Head of caudate nucleus (tissue), 42 donors: ENCODE measurements at regions of chr12 and their contacts with region 1.

Region 1: DNA sequence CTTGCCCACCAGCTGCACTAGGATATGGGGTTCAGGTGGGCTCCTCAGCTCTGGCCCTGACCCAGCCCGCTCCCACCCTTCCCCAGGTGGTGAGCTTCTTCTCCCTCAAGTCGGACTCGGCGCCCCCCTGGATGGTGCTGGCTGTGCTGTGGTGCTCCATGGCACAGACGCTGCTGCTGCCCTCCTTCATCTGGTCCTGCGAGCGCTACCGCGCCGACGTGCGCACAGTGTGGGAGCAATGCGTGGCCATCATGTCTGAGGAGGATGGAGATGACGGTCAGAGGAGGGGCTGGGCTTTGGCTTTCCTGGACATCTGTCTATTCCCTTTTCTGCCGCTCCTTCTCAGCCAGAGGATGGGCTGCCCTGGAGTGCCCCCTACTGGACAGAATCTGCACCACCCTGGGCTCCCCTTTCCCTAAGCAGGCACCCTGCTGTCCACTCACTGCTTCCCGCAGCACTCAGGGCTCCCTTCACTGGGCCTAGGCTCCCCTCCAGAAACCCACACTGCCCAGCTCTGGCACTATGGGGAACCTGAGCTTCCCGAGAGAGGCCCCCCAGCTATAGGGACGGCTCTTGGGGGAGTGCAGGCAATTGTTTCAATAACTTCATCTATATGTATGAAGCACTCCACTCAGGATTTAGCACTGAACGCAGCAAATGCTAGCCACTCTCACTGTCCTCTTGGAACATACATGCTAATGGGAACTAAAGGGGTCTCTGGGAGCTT is 2.6 kb upstream of the P3H3 start:
- DNase-seq: peak; percentile 67 to 96 (median 89)

Region 2: GRCh38 chr12:6752921-6753771 is 72.4 kb before region 1 on chr12 and contains the start of gene MLF2:
- intact Hi-C with region 1: loop called (anchors 5 kb)
- DNase-seq: peak; percentile 95 to 99 (median 97)

Region 3: DNA sequence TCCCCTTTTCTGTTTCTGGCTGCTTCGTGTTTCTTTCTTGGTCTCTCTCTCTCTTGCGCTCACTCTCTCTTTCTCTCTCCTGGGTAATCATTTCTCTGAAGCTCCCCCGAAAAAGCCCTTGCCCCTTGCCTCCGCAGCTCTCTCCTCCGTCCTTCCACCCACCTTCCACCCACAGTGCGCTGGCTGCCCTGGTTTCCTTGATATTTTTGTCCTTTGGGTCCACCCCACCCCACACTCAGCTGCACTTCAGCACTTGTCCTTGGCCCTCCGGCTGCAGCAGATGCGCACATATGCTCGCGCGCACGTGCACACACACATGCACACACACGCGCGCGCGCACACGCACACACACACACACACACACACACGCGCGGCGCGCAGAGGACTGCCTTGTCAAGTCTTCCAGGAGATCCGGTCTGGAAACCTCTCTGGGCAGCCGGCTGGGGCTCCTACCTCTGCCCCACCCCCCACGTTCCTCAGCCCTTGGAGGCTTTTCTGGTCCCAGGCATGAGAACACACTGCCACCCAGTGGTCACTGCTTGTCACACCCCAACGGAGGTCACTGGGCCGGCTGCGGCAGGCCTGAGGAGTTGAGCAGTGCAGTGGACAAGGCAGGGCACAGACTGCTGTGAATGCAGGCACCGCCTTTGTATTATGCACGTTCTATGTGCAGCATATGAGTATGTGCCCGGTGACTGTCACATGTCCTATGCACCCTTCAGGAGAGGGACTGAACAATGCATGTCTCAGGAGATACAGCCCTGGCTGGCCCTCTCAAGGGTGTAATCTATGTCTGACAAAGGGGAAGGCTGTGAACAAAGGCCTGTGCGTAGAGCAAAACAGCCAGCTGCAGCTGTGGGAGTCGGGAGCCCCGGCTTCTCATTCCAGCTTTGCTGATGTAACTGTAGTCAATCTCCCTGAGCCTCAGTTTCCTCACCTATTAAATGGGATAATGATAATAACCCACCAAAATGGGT is 46.7 kb before region 1 on chr12:
- intact Hi-C with region 1: loop called (anchors 5 kb)
- DNase-seq: peak; percentile 87 to 97 (median 92)

Region 4: GRCh38 chr12:6792522-6793201 is 32.9 kb before region 1 on chr12:
- intact Hi-C with region 1: no loop called
- DNase-seq: peak in 24 of 42 donors; percentile 14 to 68 (median 34)

Region 5: GRCh38 chr12:8088574-8088973 is 1263.0 kb after region 1 on chr12:
- intact Hi-C with region 1: no loop called
- DNase-seq: no peak